AG04449 (cell line): ENCODE measurements at regions of chr12 and their contacts with region 1.

Region 1: DNA sequence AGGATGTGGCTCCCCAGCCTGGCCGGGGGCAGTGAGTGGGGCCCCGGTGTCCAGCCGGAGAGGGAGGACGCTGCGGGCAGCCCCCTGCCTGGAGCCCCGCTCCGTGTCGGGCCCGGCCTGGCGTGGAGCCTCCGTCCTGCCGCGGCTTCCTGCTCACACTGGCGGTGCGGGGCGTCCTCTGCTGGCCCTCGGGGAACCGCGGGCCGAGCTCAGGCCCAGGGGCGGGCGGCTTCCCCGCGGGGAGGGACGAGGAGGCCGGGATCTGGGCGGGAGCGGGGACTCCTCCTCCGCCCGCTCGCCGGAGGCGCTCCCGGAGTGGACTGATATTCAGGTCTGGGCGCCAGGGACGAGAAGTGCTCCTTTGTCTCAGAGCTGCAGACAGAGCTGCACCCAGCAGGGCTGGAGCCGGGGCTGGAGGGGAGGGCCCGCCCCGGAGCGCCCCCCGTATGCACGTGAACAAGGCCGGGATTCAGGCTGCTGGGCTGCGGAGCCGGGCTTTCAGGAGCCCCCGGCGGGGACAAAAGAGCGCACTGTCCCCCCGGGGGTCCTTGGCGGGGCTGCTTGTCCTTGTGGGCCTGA is 2.2 kb downstream of the MMP17 start:
- DNase-seq: no peak
- H3K4me3 ChIP-seq: peak overlapping the region; percentile 70
- CTCF ChIP-seq: peak; percentile 93

Region 2: DNA sequence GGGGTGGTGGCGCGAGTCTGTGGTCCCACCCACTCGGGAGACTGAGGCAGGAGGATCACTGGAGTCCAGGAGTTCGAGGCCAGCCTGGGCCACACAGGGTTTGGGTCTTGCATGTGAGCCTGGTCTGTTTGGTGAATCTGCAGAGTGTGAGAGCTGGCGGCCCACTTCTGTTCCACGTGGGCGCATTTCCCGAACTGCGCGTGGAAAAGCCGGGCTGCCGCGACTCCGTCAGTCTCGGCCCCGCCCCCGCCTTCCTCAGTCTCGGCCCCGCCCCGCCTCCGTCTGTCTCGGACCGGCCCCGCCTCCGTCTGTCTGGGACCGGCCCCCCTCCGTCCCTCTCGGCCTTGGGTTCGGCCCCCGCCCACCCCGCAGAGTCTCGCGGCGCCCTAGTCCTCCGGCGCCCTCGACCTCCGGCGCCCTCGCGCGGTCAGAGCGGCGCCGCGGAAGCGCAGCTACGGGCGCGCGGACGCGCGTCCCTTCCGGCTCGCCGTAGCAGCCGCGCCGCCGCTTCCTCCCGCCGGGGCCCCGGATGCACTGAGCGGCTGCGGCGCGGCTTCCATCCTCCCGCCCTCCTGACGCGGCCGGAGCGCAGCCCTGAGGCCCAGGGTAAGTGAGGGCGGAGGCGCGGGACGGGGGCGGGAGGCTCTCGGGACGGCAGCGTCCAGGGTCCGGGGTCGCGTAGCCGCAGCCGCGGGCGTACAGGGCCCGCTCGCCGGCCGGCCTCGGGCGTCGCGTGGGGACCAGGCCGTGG is 119.2 kb after region 1 on chr12 and contains the start of gene EP400:
- CTCF ChIA-PET with region 1: interaction called, 13 read pairs
- POLR2A ChIA-PET with region 1: interaction called, 3 read pairs
- DNase-seq: peak; percentile 10
- H3K4me3 ChIP-seq: peak within 1 kb of the TSS; percentile 80
- CTCF ChIP-seq: peak; percentile 62